Ovary (tissue), 10 donors: ENCODE measurements at regions of chr1 and their contacts with region 1.

Region 1: GRCh38 chr1:221435504-221435904 is 306.4 kb downstream of the DUSP10 start:
- DNase-seq: no peak
- H3K4me3 ChIP-seq: no peak overlapping the region
- H3K27ac ChIP-seq: no peak overlapping the region
- H3K4me1 ChIP-seq: no peaks in the 10 kb centered on the region
- H3K27me3 ChIP-seq: no peaks in the 10 kb centered on the region
- CTCF ChIP-seq: peak; percentile 58 to 75 (median 60)
- EP300 ChIP-seq: no peak
- POLR2A ChIP-seq: no peak

Region 2: GRCh38 chr1:220803401-220804201 is 631.9 kb before region 1 on chr1:
- intact Hi-C with region 1: loop called in 1 of 4 experiments (anchors 10 kb)
- DNase-seq: no peak
- H3K4me3 ChIP-seq: no peak overlapping the region
- H3K27ac ChIP-seq: no peak overlapping the region
- H3K4me1 ChIP-seq: no peaks in the 10 kb centered on the region
- H3K27me3 ChIP-seq: no peaks in the 10 kb centered on the region
- CTCF ChIP-seq: peak in 2 of 3 donors; percentile 50 to 69
- EP300 ChIP-seq: no peak
- POLR2A ChIP-seq: no peak

Region 3: DNA sequence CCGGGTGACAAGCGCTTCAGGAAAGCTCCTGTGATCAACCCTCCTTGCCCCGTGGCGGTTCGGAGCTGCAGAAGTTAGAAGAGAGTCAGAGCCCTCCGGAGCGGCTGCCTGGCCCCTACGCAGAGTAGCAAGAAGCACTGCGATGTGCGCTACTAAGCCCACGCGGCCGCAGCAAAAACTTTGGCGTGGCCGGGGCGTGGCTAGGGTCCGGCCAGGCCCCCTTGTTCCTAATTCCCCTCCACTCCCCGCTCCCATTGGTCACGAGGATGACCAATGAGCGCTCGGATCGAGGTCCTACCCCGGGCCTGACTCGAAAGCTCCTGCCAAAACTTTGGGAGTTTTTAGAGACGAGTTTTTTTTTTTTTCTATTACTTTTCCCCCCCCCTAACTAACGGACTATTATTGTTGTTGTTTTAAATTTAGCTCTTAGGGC is 556.4 kb before region 1 on chr1 and contains the start of gene HLX:
- intact Hi-C with region 1: loop called in 3 of 4 experiments (anchors 10 kb)
- DNase-seq: peak; percentile 77 to 89 (median 81)
- H3K4me3 ChIP-seq: peak within 1 kb of the TSS; percentile 58
- H3K27ac ChIP-seq: peak within 1 kb of the TSS; percentile 65 to 85
- H3K4me1 ChIP-seq: peaks cover 6% of the 10 kb centered on the region
- H3K27me3 ChIP-seq: no peaks in the 10 kb centered on the region
- CTCF ChIP-seq: no peak
- EP300 ChIP-seq: no peak
- POLR2A ChIP-seq: no peak
- total RNA-seq, gene HLX: 2.1 to 7.6 (median 3.1) TPM

Region 4: GRCh38 chr1:221263831-221264767 is 171.4 kb before region 1 on chr1:
- intact Hi-C with region 1: loop called in 1 of 4 experiments (anchors 10 kb)
- DNase-seq: peak in 1 of 5 donors; percentile 36
- H3K4me3 ChIP-seq: no peak overlapping the region
- H3K27ac ChIP-seq: no peak overlapping the region
- H3K4me1 ChIP-seq: no peaks in the 10 kb centered on the region
- H3K27me3 ChIP-seq: no peaks in the 10 kb centered on the region
- CTCF ChIP-seq: no peak
- EP300 ChIP-seq: no peak
- POLR2A ChIP-seq: no peak

Region 5: GRCh38 chr1:221284028-221284427 is 151.5 kb before region 1 on chr1:
- intact Hi-C with region 1: no loop called
- DNase-seq: no peak
- H3K4me3 ChIP-seq: no peak overlapping the region
- H3K27ac ChIP-seq: no peak overlapping the region
- H3K4me1 ChIP-seq: no peaks in the 10 kb centered on the region
- H3K27me3 ChIP-seq: no peaks in the 10 kb centered on the region
- CTCF ChIP-seq: no peak
- EP300 ChIP-seq: no peak
- POLR2A ChIP-seq: no peak